GM12878 (cell line): ENCODE measurements at regions of chr12 and their contacts with region 1.

Region 1: GRCh38 chr12:92363295-92364146 is 217.9 kb upstream of the BTG1 start:
- DNase-seq: peak; percentile 96
- ATAC-seq: peak; percentile 82
- H3K4me3 ChIP-seq: peak overlapping the region; percentile 62
- H3K27ac ChIP-seq: peak overlapping the region; percentile 99
- H3K4me1 ChIP-seq: peaks cover 17% of the 10 kb centered on the region; the same call in 1 of the 2 replicates
- H3K27me3 ChIP-seq: no peaks in the 10 kb centered on the region
- CTCF ChIP-seq: no peak
- EP300 ChIP-seq: peak; percentile 60 to 79; a peak in 3 of 4 replicates
- POLR2A ChIP-seq: peak; percentile 83
- RAD21 ChIP-seq: peak; percentile 12; the same call in 1 of the 2 replicates

Region 2: GRCh38 chr12:92170050-92170449 is 193.5 kb before region 1 on chr12:
- CTCF ChIA-PET with region 1: interaction called, 3 read pairs
- POLR2A ChIA-PET with region 1: interaction called, 5 read pairs
- RAD21 ChIA-PET with region 1: interaction called, 34 read pairs
- SMC1A ChIA-PET with region 1: interaction called, 13 read pairs
- in situ Hi-C with region 1: no loop called
- intact Hi-C with region 1: no loop called
- DNase-seq: no peak
- ATAC-seq: no peak
- H3K4me3 ChIP-seq: no peak overlapping the region
- H3K27ac ChIP-seq: no peak overlapping the region
- H3K4me1 ChIP-seq: peaks cover 16% of the 10 kb centered on the region
- H3K27me3 ChIP-seq: no peaks in the 10 kb centered on the region
- CTCF ChIP-seq: no peak
- EP300 ChIP-seq: no peak
- POLR2A ChIP-seq: no peak
- RAD21 ChIP-seq: no peak

Region 3: GRCh38 chr12:92396647-92397252 is 33.2 kb after region 1 on chr12:
- CTCF ChIA-PET with region 1: interaction called, 8 read pairs
- POLR2A ChIA-PET with region 1: interaction called, 40 read pairs
- RAD21 ChIA-PET with region 1: interaction called, 71 read pairs
- SMC1A ChIA-PET with region 1: interaction called, 75 read pairs
- in situ Hi-C with region 1: no loop called
- intact Hi-C with region 1: no loop called
- DNase-seq: no peak
- ATAC-seq: no peak
- H3K4me3 ChIP-seq: no peak overlapping the region
- H3K27ac ChIP-seq: no peak overlapping the region; the same call in 1 of the 2 replicates
- H3K4me1 ChIP-seq: peaks cover 32% of the 10 kb centered on the region
- H3K27me3 ChIP-seq: no peaks in the 10 kb centered on the region
- CTCF ChIP-seq: no peak
- EP300 ChIP-seq: no peak
- POLR2A ChIP-seq: no peak
- RAD21 ChIP-seq: no peak

Region 4: GRCh38 chr12:92466391-92467305 is 103.1 kb after region 1 on chr12:
- CTCF ChIA-PET with region 1: interaction called, 5 read pairs
- POLR2A ChIA-PET with region 1: interaction called, 7 read pairs
- RAD21 ChIA-PET with region 1: interaction called, 22 read pairs
- SMC1A ChIA-PET with region 1: interaction called, 20 read pairs
- in situ Hi-C with region 1: no loop called
- intact Hi-C with region 1: loop called (anchors 1 kb)
- DNase-seq: peak; percentile 90
- ATAC-seq: peak; percentile 39
- H3K4me3 ChIP-seq: peak overlapping the region; percentile 82
- H3K27ac ChIP-seq: peak overlapping the region; percentile 99
- H3K4me1 ChIP-seq: peaks cover 62% of the 10 kb centered on the region
- H3K27me3 ChIP-seq: no peaks in the 10 kb centered on the region
- CTCF ChIP-seq: no peak
- EP300 ChIP-seq: peak; percentile 65 to 70; a peak in 3 of 4 replicates
- POLR2A ChIP-seq: peak; percentile 85
- RAD21 ChIP-seq: peak; percentile 5

Region 5: GRCh38 chr12:92539113-92539749 is 175.7 kb after region 1 on chr12:
- CTCF ChIA-PET with region 1: interaction called, 4 read pairs
- POLR2A ChIA-PET with region 1: no interaction called
- RAD21 ChIA-PET with region 1: no interaction called
- SMC1A ChIA-PET with region 1: interaction called, 3 read pairs
- in situ Hi-C with region 1: no loop called
- intact Hi-C with region 1: loop called (anchors 2 kb)
- DNase-seq: peak; percentile 93
- ATAC-seq: peak; percentile 54
- H3K4me3 ChIP-seq: no peak overlapping the region
- H3K27ac ChIP-seq: peak overlapping the region; percentile 99
- H3K4me1 ChIP-seq: peaks cover 72% of the 10 kb centered on the region
- H3K27me3 ChIP-seq: no peaks in the 10 kb centered on the region
- CTCF ChIP-seq: no peak
- EP300 ChIP-seq: peak; percentile 90 to 98
- POLR2A ChIP-seq: no peak
- RAD21 ChIP-seq: 0 out of 2 replicates have a peak, but pooled peaks have one; percentile 36

Region 6: DNA sequence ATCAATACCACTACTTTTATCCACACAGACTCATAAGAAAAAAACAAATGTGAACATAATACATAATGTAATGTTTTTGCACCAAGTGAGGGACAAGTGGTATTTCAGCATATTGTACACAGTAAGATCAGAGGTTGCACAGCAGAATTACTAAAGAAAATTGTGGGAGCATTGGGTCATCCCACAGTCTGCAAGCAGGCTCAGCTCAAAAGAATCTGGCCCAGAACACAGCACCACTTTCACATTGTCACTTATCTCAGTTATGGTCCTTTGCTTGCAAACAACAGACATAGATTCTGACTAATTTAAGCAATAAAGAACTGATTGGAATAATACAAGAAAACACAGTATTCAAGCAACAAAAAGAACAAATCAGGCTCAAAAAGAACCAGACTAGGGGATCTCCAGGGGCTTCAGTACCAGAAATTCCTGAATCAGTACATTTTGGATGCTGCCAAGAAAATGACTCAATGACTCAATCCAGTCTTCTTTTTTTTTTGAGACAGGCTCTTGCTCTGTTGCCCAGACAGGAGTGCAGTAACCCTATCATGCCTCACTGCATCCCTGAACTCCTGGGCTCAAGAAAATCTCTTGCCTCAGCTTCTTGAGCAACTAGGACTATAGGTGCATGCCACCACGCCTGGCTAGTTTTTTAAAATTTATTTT is 608.5 kb after region 1 on chr12:
- CTCF ChIA-PET with region 1: no interaction called
- POLR2A ChIA-PET with region 1: no interaction called
- RAD21 ChIA-PET with region 1: no interaction called
- SMC1A ChIA-PET with region 1: no interaction called
- in situ Hi-C with region 1: no loop called
- intact Hi-C with region 1: no loop called
- DNase-seq: no peak
- ATAC-seq: peak; percentile 39
- H3K4me3 ChIP-seq: no peak overlapping the region
- H3K27ac ChIP-seq: peak overlapping the region; percentile 91
- H3K4me1 ChIP-seq: peaks cover 47% of the 10 kb centered on the region
- H3K27me3 ChIP-seq: no peaks in the 10 kb centered on the region
- CTCF ChIP-seq: no peak
- EP300 ChIP-seq: no peak
- POLR2A ChIP-seq: no peak
- RAD21 ChIP-seq: no peak